ENCODE measurements at regions of chr10 and their contacts with region 1.

Region 1: GRCh38 chr10:133139551-133140065 is 20.4 kb upstream of the KNDC1 start:
- DNase-seq: no peak
- H3K4me3 ChIP-seq: no peak overlapping the region
- H3K27ac ChIP-seq: no peak overlapping the region
- H3K4me1 ChIP-seq: no peaks in the 10 kb centered on the region
- H3K27me3 ChIP-seq: peaks cover 5% of the 10 kb centered on the region
- CTCF ChIP-seq: no peak

Region 2: DNA sequence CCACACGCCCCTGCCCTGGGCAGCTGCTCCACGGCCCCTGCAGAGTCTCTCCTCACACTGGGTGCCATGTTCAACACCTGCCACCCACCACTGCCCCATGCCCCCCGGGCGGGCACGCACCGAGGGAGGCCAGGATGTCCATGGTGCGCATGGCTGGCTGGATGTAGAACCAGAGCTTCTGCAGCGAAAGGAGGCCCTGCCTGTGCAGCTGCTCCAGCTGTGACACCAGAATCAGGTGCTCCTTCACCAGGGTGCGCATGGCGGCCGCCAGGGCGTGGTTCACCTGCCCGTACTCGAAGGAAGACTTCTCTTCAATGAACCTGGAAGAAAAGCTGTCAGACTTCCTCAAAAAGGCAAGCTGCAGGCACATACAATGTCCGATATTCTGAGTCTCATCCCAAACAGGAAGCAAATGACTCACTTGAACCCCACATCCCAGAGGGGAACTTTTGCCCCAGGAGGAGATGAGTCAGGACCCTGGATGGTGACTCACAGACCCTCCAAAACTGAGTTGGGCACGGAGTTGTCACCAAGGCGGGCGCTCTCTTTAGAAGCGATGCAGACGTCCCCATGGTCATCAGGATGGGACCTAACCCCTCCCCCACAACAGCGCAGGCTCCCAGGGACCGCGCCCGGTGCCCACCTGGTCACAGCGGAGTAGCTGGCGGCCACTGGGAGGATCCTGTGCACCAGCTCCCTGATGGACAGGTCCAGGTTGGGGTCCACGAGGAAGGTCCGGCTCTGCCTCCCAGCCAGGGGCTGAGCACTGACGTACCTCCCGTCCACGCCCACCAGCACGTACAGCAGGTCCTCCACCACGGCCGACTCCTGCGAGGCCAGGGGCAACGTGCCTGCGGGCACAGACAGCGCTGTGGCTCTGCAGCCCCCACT is 153.6 kb after region 1 on chr10:
- intact Hi-C with region 1: loop called (anchors 10 kb)
- DNase-seq: no peak
- H3K4me3 ChIP-seq: no peak overlapping the region
- H3K27ac ChIP-seq: no peak overlapping the region
- H3K4me1 ChIP-seq: no peaks in the 10 kb centered on the region
- H3K27me3 ChIP-seq: no peaks in the 10 kb centered on the region
- CTCF ChIP-seq: no peak

Region 3: DNA sequence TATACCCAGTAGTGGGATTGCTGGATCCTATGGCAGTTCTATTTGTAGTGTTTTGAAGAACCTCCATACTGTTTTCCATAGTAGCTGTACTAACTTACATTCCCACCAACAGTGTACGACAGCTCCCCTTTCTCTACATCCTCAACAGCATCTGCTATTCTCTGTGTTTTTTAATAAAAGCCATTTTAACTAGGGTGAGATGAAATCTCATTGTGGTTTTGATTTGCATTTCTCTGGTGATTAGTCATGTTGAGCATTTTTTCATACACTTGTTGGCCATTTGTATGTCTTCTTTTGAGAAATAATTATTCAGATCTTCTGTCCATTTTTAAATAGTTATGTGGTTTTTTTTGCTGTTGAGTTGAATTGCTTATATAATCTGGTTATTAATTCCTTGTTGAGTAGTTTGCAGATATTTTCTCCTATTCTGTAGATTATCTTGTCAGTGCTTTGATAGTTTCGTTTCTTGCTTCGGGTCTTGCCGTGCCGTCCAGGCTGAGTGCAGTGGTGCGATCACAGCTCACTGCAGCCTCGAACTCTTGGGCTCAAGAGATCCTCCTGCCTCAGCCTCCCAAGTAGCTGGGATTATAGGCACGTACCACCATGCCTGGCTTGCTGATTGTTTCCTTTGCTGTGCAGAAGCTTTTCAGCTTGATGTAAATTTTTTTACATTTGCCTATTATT is 266.4 kb after region 1 on chr10:
- intact Hi-C with region 1: no loop called
- DNase-seq: no peak
- H3K4me3 ChIP-seq: no peak overlapping the region
- H3K27ac ChIP-seq: no peak overlapping the region
- H3K4me1 ChIP-seq: no peaks in the 10 kb centered on the region
- H3K27me3 ChIP-seq: no peaks in the 10 kb centered on the region
- CTCF ChIP-seq: no peak

Region 4: GRCh38 chr10:133438711-133439273 is 299.2 kb after region 1 on chr10:
- intact Hi-C with region 1: no loop called
- DNase-seq: no peak
- H3K4me3 ChIP-seq: no peak overlapping the region
- H3K27ac ChIP-seq: no peak overlapping the region
- H3K4me1 ChIP-seq: no peaks in the 10 kb centered on the region
- H3K27me3 ChIP-seq: no peaks in the 10 kb centered on the region
- CTCF ChIP-seq: peak; percentile 27